ENCODE measurements at regions of chr7 and their contacts with region 1.

Region 1: DNA sequence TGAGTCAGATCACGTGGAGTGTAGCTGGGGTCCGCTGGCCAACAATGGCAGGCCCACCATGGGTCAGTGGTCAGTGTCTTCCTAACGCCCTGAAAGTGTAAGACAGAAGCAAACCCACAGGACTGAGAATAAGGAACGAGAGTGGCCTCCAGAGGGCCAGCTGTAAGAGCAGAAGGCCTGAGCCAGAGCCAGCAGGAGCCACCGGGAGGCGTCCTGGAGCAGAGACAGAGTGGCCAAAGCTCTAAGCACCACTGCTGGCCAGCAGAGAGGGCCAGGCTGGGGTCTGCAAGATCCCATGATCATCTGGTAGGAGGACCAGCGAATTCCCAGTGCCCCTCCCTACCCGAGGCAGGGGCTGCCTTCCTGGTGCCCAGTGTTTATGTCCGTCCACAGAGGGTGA is 9.2 kb downstream of the CCDC201 start:
- DNase-seq: peak in 1 of 6 donors; percentile 31
- ATAC-seq: no peak
- H3K4me3 ChIP-seq: no peak overlapping the region
- H3K27ac ChIP-seq: no peak overlapping the region
- H3K4me1 ChIP-seq: no peaks in the 10 kb centered on the region
- H3K27me3 ChIP-seq: no peaks in the 10 kb centered on the region
- CTCF ChIP-seq: no peak

Region 2: GRCh38 chr7:45160417-45160881 is 703.3 kb before region 1 on chr7:
- intact Hi-C with region 1: loop called in 1 of 3 experiments (anchors 10 kb)
- DNase-seq: peak in 1 of 6 donors; percentile 26
- ATAC-seq: no peak
- H3K4me3 ChIP-seq: no peak overlapping the region
- H3K27ac ChIP-seq: no peak overlapping the region
- H3K4me1 ChIP-seq: no peaks in the 10 kb centered on the region
- H3K27me3 ChIP-seq: no peaks in the 10 kb centered on the region
- CTCF ChIP-seq: no peak

Region 3: DNA sequence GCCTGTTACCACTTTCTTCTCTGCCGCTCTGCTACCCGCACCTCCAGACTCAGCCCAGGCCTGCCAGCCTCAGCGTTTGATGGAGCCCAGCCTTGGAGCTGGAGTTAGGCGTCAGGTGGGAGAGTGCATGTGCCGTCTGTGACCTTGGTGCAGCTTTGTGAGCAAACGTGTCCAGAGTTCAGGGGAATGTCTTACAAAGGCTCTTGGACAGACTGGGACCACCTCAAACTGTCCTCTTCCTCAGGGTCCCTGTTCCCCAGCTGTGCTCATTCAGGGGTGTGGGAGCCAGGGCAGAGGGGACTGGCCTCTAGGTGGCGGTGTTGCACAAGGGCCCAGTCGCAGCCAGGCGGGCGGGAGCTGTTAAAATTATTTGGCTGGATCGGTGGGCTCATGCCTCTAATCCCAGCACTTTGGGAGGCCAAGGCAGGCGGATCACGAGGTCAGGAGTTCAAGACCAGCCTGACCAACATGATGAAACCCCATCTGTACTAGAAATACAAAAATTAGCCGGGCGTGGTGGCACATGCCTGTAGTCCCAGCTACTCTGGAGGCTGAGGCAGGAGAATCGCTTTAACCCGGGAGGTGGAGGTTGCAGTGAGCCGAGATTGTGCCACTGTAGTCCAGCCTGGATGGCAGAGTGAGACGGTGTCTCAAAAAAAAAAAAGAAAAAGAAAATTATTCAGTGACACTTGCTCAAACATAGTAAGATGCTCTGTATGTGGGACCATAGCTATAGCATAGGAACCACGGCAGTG is 200.4 kb before region 1 on chr7:
- intact Hi-C with region 1: loop called in 1 of 3 experiments (anchors 10 kb)
- DNase-seq: peak in 4 of 6 donors; percentile 23 to 84 (median 50)
- ATAC-seq: peak; percentile 66 to 97 (median 84)
- H3K4me3 ChIP-seq: no peak overlapping the region
- H3K27ac ChIP-seq: no peak overlapping the region
- H3K4me1 ChIP-seq: no peaks in the 10 kb centered on the region
- H3K27me3 ChIP-seq: no peaks in the 10 kb centered on the region
- CTCF ChIP-seq: peak; percentile 46 to 62 (median 58)

Region 4: GRCh38 chr7:45978010-45978681 is 114.4 kb after region 1 on chr7:
- intact Hi-C with region 1: no loop called
- DNase-seq: peak in 3 of 6 donors; percentile 27 to 40 (median 39)
- ATAC-seq: peak; percentile 55 to 91 (median 82)
- H3K4me3 ChIP-seq: no peak overlapping the region
- H3K27ac ChIP-seq: peak overlapping the region in 2 of 4 donors; percentile 47 to 48
- H3K4me1 ChIP-seq: peaks cover 0 to 3% (median 0%) of the 10 kb centered on the region in 3 donors
- H3K27me3 ChIP-seq: no peaks in the 10 kb centered on the region
- CTCF ChIP-seq: no peak